ENCODE measurements at regions of chr5 and their contacts with region 1.

Region 1: DNA sequence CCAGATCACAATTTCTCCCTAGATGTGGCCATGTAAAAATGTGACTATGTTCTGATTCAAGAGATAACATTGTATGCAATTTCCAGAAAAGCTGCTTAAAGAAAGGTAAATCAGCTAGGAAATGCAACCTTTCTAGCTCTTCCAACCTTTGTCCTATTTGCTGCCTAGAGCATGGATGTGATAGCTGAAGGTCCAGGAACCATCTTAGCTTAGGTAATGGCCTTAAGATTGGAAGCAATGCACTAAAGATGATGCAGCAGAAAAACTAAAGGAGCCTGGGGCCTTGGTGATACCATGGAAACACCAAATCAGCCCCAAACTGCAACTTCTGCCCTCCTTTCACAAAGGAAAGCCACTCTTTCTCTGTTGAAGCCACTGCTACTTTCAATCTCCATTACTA is 27.0 kb downstream of the CPLANE1 start:
- DNase-seq: no peak
- ATAC-seq: no peak
- H3K4me3 ChIP-seq: no peak overlapping the region
- H3K27ac ChIP-seq: no peak overlapping the region
- H3K4me1 ChIP-seq: no peaks in the 10 kb centered on the region
- H3K27me3 ChIP-seq: no peaks in the 10 kb centered on the region
- CTCF ChIP-seq: no peak

Region 2: DNA sequence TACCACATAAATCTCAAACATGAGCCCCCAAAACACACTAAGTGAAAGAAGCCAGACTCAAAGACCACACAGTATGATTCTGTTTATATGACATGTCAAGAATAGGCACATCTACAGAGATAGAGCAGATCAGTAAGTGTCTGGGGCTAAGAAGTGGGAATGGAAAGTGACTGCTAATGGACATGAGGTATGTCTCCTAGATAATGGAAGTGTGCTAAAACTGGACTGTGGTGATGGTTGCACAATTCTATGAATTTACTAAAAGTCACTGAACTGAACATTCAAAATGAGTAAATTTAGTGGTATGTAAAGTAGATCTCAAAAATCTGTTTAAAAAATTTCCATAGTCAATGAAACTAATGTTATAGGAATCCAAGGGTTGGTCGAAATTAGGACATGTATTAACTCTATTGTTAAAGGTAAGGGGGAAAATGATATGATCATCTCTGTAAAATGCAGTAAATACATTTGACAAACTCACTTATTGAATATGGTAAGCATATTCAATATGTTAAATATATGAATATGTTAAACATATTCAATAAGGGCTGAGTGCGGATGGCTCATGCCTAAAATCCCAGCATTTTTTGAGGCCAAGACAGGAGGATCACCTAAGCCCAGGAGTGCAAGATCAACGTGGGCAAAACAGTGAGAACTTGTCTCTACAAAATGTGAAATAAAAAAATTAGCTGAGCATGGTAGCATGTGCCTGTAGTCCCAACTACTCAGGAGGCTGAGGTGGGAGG is 97.0 kb after region 1 on chr5:
- intact Hi-C with region 1: loop called (anchors 10 kb)
- DNase-seq: no peak
- ATAC-seq: no peak
- H3K4me3 ChIP-seq: no peak overlapping the region
- H3K27ac ChIP-seq: no peak overlapping the region
- H3K4me1 ChIP-seq: no peaks in the 10 kb centered on the region
- H3K27me3 ChIP-seq: no peaks in the 10 kb centered on the region
- CTCF ChIP-seq: no peak

Measured in upper lobe of right lung (tissue), 1 donor.